Right ventricle myocardium superior (tissue), 1 donor: ENCODE measurements at regions of chr7 and their contacts with region 1.

Region 1: DNA sequence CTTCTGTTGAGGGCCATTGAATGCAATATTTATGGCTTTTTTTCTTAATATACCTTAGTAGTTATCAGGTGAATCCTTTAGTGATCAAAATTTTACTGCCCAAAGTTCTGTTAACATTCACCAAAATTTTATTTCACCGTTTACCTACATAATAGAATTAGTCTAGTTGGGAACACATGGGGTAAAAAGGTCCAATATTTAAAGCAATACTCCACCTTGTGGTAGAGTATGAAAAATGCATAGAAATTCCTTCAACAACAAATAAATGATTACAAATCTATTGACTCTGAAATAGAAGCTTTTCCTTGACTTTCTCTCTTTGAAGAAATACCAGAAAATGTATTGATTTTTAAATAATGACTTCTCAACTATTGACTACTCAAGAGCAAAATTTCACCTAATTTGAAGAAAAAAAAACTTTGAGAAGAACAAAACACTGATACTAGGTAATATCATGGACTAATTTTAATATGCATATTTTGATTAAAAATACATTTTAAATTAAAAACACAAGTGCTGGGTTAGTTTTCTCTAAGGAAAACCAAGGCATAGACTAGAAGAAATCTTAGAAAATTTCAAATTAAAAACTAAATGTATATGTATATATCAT is 43.3 kb downstream of the POLR1F start:
- DNase-seq: no peak
- ATAC-seq: no peak

Region 2: DNA sequence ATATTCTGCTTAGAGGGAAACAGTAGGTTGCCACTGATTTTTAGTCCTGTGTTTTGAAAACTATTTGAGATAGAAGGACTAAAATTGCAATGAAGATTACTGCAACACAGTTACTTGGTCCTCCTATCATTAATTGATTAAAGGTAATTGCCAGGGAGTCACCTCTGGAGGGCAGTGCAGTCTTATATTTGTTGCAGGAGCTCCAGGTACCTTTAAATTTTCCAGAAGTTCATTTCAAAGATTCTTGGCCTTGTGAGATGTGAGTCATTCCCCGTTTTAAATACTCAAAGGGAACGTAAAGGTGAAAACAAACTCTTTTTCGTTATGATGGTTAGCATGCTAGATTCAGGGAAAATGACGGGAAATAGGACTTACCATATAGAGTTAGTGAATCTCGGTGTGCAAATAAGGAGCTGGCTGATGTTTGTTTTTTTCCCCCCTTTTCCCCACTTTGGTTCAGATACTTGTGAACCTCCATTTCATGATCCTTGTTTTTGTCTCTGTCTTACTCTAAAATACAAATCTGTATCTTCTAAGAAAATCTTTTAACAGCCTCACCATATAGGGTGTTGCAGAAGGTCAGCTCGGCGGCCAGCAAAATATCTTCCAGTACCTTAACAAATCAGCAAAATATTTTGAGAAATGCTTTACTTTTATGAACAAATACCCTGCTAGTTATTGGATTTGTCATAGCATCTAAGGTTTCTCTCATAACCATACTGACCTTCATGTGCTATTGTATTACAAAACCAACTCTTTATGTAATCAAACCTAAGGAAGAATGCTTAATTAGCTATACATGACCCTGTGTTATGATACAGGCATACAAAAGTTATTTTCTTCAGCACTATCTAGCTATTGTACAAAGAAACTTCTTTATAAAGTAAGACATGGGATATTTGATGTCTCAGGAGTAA is 1312.9 kb before region 1 on chr7:
- intact Hi-C with region 1: loop called (anchors 10 kb)
- DNase-seq: no peak
- ATAC-seq: peak; percentile 67